GM18951 (cell line): ENCODE measurements at regions of chr12 and their contacts with region 1.

Region 1: DNA sequence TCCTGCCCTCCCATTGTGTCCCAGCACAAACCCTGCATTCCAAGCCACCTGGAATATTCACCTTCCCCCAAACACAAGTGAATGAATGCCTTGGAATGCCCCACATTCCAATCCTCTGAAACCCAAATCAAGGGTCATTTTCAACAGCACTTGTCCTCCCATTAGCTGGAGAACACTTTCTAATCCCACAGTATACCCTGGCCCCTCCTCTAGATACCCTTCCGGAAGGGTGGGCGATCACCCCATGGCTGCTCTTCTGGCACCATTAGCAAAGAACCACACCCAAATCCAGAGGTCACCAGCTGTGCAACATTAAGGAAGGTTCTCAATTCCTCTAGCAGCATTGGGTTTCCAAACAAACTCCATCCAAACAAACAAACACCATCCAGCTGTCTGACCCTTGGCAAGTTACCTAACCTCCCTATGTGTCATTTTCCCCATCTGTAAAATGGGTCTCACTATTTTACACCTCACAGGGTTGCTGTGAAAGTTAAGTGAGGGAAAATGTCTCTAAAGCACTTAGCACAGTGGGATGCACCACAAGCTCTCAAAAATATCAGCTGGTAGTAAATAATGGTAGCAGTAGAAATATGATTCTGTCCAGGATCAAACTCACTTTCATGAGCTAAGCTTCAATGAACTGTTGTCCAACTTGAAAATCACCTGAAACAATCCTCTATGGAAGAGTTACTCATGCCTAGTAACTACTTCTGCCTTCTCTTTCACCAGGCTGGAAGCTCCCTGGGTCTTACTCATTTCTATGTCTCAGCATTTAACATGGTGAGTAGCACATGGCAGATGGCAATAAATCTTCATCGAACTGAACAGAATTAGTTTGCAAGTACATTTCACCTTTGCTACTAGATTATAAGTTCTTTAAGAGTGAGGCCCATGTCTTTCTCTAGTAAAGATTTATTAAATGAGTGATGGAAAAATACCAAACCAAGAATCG is 5.3 kb downstream of the NUAK1 start:
- POLR2A ChIP-seq: no peak

Region 2: DNA sequence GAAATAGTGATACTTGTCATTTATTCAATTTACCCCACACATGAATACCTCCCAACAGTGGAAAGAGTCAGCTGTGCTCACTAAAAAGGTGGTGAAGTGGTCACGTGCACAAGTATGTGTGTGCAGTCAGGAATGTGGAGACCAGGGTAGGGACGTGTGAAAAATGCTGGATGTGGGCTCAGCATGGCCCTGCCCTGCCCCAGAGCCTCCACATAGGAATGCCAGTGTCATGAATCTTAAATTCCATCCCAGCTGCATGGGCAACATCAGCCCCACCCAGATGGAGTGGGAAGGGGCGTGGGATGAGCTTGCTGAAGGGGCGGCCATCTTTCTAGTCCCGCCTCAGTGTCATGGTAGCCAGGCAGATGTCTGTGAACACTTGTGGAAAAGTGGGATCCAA is 715.2 kb before region 1 on chr12:
- in situ Hi-C with region 1: loop called (anchors 5 kb)
- POLR2A ChIP-seq: no peak

Region 3: DNA sequence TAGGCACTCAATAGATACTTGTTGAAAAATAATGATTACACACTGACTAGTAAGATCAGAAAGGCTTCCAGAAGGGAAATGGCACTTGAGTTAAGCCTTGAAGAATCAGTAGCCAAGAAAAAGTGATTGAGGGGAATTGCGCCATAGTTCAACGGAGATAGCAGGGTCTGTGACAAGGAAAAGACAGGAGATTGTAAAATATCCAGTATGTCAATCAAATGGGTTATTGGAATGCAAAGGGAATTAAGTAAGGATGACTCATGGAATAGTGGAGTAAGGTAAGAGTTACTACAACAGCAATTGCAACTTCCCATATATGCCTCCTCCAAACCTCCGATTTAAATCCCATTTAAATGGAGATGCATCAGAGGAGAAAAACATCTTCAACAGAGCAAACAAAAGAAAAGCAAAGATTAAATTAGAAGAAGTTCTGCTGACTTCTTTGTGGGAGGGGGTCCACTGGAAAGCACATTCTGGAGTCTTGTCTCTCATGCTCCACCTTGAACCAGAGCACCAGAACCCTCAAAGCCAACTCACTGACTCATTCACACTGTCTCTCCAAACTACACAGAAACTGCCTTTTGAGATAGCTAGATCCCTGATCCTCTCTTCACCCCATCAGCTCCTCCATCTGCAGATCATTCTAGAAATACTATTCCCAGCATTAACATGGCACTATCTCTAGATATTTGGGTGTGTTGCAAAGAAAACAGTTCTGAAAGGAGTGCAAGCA is 132.9 kb before region 1 on chr12:
- in situ Hi-C with region 1: no loop called
- POLR2A ChIP-seq: no peak